Aorta (tissue), 5 donors: ENCODE measurements at regions of chr4 and their contacts with region 1.

Region 1: GRCh38 chr4:39256436-39256835 is 74.1 kb downstream of the WDR19 start:
- DNase-seq: peak in 1 of 2 donors; percentile 55
- ATAC-seq: peak; percentile 81
- H3K4me3 ChIP-seq: no peak overlapping the region
- H3K27ac ChIP-seq: peak overlapping the region; percentile 59 to 94
- H3K4me1 ChIP-seq: peaks cover 0 to 4% of the 10 kb centered on the region in 2 donors
- H3K27me3 ChIP-seq: no peaks in the 10 kb centered on the region

Region 2: GRCh38 chr4:39181905-39182638 is 74.4 kb before region 1 on chr4 and contains the start of gene WDR19:
- intact Hi-C with region 1: loop called in 1 of 2 experiments (anchors 1 kb)
- DNase-seq: peak; percentile 99
- ATAC-seq: peak; percentile 100
- H3K4me3 ChIP-seq: peak within 1 kb of the TSS; percentile 69 to 95
- H3K27ac ChIP-seq: peak within 1 kb of the TSS in 1 of 2 donors; percentile 2
- H3K4me1 ChIP-seq: no peaks in the 10 kb centered on the region
- H3K27me3 ChIP-seq: no peaks in the 10 kb centered on the region
- total RNA-seq, gene WDR19: 40.9 to 63.4 TPM

Region 3: DNA sequence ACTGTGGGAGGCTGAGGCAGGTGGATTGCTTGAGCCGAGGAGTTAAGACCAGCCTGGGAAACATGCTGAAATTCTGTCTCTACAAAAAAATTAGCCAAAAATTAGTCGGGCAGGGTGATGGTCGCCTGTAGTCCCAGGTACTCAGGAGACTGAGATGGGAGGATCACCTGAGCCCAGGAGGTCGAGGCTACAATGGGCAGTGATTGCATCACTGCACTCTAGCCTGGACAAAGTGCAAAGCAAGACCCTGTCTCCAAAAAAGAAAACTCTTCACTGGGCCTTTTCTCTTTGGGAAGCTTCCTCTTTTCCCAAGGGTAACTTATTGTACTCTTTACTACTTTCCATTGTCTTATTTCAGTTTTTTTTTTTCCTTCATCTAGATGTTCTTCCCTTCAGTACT is 530.4 kb after region 1 on chr4:
- intact Hi-C with region 1: no loop called
- DNase-seq: no peak
- ATAC-seq: no peak
- H3K4me3 ChIP-seq: no peak overlapping the region
- H3K27ac ChIP-seq: no peak overlapping the region
- H3K4me1 ChIP-seq: no peaks in the 10 kb centered on the region
- H3K27me3 ChIP-seq: no peaks in the 10 kb centered on the region